ENCODE measurements at regions of chr12 and their contacts with region 1.

Region 1: DNA sequence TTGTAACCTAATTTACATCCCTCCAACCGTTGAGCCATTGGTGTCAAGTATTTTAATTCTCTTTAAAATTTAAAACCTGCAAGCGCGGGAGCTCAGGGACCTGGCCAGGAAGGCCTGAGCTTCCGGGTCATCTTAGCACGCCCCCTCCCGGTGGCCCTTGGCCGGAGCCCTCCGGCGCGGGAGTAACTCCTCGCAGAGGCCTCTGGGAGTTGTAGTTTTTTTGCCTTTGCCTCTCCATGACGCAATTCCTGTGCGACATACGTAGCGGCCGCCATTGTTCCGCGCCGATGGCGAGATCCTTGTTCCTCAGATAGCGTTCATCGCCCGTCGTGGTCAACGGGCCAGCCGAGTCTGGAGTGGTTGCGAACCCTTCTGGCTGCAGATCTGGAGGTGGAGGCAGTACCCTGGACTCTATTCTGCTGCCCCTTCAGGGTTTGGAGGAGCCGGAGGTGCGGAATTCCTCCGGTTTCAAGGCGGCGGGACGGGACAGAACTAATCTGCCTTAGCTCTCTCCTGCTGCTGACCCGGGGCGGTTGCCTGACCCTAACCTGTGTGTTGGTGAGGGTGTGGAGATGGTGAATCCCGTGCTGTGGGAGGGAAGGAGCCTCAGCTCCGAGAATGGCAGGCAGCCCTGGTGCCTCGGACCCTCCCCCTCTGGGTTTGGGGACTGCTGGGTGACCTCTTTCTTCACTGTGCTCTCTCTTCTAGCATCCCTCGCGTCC is at the start of gene ZNF268:
- DNase-seq: peak; percentile 95
- ATAC-seq: peak; percentile 98
- H3K4me3 ChIP-seq: peak within 1 kb of the TSS; percentile 91 to 100 (median 93)
- H3K4me3 Mint-ChIP-seq: peak within 1 kb of the TSS; percentile 95
- H3K27ac ChIP-seq: peak within 1 kb of the TSS; percentile 78 to 95
- H3K27ac Mint-ChIP-seq: peak within 1 kb of the TSS; percentile 96
- H3K4me1 ChIP-seq: peaks cover 10 to 13% of the 10 kb centered on the region in 2 donors
- H3K4me1 Mint-ChIP-seq: peaks cover 18% of the 10 kb centered on the region
- H3K27me3 ChIP-seq: no peaks in the 10 kb centered on the region
- H3K27me3 Mint-ChIP-seq: no peaks in the 10 kb centered on the region
- CTCF ChIP-seq: peak; percentile 88
- total RNA-seq, gene ZNF268: 32.4 and 37.1 TPM in 2 replicates

Region 2: GRCh38 chr12:133037207-133038005 is 144.0 kb before region 1 on chr12 and contains the start of gene ZNF84:
- CTCF ChIA-PET with region 1: no interaction called
- POLR2A ChIA-PET with region 1: no interaction called
- intact Hi-C with region 1: loop called (anchors 1 kb)
- DNase-seq: peak; percentile 99
- ATAC-seq: peak; percentile 95
- H3K4me3 ChIP-seq: peak within 1 kb of the TSS; percentile 51 to 82 (median 69)
- H3K4me3 Mint-ChIP-seq: peak within 1 kb of the TSS; percentile 97
- H3K27ac ChIP-seq: peak within 1 kb of the TSS; percentile 88 to 95
- H3K27ac Mint-ChIP-seq: peak within 1 kb of the TSS; percentile 99
- H3K4me1 ChIP-seq: peaks cover 7 to 10% of the 10 kb centered on the region in 2 donors
- H3K4me1 Mint-ChIP-seq: peaks cover 13% of the 10 kb centered on the region
- H3K27me3 ChIP-seq: no peaks in the 10 kb centered on the region
- H3K27me3 Mint-ChIP-seq: peaks cover 3% of the 10 kb centered on the region
- CTCF ChIP-seq: no peak
- total RNA-seq, gene ZNF84: 48.4 and 61.5 TPM in 2 replicates

Region 3: DNA sequence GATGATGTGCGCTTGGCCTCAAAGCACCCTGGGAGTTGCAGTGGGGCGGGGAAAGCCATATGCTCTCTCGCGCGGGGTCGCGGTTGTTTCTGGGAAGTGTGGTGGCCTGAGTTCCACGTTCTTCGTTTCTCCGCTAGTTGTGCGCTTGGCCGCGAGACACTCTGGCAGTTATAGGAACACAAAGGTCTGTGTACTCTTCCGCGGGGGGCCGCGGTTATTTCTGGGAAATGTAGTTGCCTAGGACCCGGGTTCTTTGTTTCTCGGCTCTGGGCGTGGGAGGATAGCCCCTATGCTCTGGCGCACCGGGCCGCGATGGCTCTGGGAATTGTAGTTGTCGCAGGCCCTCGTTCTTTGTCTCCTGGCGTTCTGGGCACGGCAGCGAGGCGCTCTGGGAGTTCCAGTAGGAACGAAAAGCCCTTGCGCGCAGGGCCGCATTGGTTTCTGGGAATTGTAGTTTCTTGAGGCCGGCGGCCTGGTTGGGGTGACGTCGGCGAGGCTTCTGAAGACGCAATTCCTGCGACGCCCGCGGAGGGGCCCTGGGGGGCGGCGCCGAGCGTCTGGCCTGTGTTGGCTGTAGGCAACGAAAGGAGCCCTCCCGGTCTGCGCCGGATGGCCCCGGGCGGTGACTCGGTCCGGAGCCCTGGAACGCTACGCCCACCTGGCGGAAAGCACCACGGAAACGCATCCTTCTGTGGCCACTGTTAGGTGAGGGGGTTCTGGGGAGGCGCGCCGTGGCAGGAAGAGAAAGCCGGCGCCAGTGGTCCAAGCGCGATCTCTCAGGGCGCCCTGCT is 100.8 kb before region 1 on chr12 and contains the start of gene ZNF140:
- CTCF ChIA-PET with region 1: interaction called, 9 read pairs
- POLR2A ChIA-PET with region 1: interaction called, 10 read pairs
- intact Hi-C with region 1: no loop called
- DNase-seq: peak; percentile 99
- ATAC-seq: peak; percentile 63
- H3K4me3 ChIP-seq: peak within 1 kb of the TSS; percentile 63 to 95 (median 84)
- H3K4me3 Mint-ChIP-seq: no peak within 1 kb of the TSS
- H3K27ac ChIP-seq: peak within 1 kb of the TSS; percentile 99
- H3K27ac Mint-ChIP-seq: peak within 1 kb of the TSS; percentile 26
- H3K4me1 ChIP-seq: peaks cover 12 to 15% of the 10 kb centered on the region in 2 donors
- H3K4me1 Mint-ChIP-seq: peaks cover 8% of the 10 kb centered on the region
- H3K27me3 ChIP-seq: no peaks in the 10 kb centered on the region
- H3K27me3 Mint-ChIP-seq: no peaks in the 10 kb centered on the region
- CTCF ChIP-seq: peak; percentile 47
- total RNA-seq, gene ZNF140: 24.2 and 26.8 TPM in 2 replicates